ENCODE measurements at regions of chr14 and their contacts with region 1.

Region 1: DNA sequence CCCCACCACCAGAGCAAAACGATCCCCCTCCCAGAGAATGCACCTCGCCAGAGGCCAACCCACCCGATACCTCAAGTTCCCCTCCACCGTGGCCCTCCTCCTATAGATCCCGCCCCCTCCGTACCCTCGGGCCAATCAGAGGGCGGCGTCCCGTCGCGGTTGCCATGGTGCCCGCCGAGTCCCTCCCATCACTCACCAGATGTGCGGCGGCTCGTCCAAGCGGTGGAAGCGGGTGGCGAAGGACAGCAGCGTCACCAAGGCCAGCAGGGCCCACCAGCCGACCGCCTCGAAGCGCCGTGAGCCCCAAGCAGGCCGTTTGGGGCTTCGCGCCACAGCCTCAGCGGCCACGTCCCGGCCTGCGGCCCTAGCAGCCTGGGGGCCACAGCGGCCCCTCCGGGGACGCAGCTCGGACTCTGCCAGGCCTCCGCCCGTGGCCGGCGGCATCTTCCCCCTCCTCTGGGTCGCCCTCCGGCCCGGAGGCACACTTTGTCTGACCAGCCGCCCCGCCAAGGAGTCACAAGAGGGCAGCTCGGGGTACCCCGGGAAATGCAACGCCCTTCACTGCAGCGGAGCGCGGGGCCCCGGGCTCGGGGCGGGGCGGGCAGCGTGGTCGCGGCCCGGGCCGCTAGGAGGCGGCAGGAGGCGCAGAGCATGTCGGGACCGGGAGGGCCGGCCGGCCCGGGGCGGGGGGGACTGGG is at the start of gene POMT2:
- DNase-seq: peak; percentile 92 to 100 (median 96)

Region 2: GRCh38 chr14:77097700-77098528 is 222.5 kb before region 1 on chr14 and contains the start of gene CIPC:
- intact Hi-C with region 1: loop called (anchors 2 kb)
- DNase-seq: peak; percentile 99 to 100 (median 100)

Region 3: DNA sequence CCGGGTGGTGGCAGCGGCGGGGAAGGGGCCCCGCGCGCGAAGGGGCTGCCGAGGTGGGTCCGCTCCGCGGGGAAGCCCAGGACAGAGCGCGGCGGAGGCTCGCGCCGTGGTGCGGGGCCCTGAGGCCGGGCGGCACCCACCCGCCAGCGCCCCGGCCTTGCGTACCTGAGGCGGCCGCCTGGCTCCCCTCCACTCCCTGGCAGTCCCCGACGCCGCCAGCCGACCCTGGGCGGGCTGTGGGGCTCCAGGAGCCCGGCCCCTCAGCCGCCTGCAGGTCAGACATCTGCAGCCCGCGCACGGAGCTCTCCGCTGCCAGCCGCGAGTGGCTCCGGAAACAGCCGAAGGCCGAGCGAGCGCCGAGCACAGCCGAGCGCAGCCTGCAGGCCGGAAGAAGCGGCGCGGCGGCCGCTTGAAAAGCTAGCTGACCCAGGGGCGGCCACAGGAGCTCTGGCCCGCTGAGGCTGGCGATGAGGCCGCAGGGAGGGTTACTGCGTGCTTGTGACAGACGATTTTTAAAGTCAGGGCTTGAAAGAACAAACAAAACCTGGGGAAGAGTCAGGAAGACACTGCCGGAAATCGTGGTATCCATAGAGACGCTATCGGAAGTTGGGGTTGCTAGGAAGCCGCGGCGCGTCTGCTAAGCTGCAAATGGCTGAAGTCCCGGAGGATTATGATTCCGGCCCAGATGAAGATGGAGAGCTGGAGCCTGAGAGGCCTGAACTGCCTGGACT is 56.5 kb after region 1 on chr14 and contains the starts of genes SAMD15 and TMED8:
- intact Hi-C with region 1: loop called (anchors 5 kb)
- DNase-seq: peak; percentile 73 to 97 (median 82)

Region 4: GRCh38 chr14:77554207-77554606 is 233.8 kb after region 1 on chr14:
- intact Hi-C with region 1: loop called (anchors 10 kb)
- DNase-seq: no peak

Region 5: DNA sequence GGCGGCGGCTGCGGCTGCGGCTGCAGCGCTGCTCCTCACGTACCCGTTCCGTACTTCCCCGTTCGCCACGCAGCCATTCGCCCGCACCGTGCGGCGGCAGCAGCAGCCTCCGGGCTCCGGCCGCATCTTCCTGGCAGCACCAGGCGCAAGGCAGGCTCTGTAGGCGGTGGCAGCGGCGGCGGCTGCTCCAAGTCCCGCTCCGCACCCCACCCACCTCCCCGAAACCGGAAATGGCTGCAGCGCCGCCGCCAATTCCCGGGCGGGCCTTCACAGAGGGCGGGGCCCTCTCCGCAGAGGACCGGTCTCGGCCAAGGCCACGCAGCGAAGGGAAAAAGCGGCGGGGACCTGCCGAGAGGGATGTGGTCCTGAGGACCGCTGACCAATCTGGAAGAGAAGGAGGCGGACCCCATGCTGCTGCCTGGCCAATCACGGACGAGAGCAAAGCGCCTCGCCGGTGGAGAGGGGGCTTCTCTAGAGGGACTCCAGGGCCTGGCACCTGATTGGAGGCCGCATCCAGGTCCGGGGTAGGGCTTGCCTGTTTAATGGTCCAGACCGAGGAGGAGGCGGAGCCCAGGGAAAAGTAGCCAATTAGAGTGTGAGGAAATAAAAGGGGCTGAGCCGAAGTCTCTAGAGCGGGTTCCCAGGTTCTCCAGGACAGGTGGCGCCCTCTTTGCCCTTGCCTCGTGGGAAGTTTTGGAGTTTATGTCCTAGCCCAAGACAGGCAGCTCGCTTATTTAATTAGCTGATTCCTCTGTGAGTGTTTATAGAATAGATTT is 296.3 kb after region 1 on chr14 and contains the start of gene SPTLC2:
- intact Hi-C with region 1: loop called (anchors 10 kb)
- DNase-seq: peak; percentile 99 to 100 (median 100)

Measured in posterior cingulate gyrus (tissue), 11 donors.